IMR-90 (cell line): ENCODE measurements at regions of chr4 and their contacts with region 1.

Region 1: DNA sequence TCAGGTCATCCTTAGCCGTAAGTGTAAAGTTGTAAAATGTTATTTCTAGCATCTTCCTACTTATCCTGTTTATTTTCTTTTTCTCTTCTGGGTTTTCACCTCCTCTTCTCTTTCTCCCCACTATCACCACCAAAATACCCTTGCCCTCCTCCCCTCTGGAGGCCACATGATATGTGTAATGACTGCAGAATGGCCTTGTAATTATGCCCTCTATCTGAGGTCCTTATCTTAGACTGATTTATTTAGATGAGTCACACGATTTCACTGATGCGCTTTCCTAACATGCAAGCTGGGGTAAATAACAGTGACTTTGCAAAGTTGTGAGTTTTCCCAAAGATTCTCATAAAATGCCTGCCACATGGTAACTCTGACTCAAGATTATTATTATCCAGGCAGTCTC is 231.8 kb upstream of the GPRIN3 start:
- DNase-seq: peak; percentile 93
- ATAC-seq: peak; percentile 87
- H3K4me3 ChIP-seq: no peak overlapping the region
- H3K27ac ChIP-seq: peak overlapping the region; percentile 46; the same call in 1 of the 2 replicates
- H3K4me1 ChIP-seq: peaks cover 11% of the 10 kb centered on the region
- H3K27me3 ChIP-seq: no peaks in the 10 kb centered on the region
- CTCF ChIP-seq: no peak
- POLR2A ChIP-seq: no peak
- RAD21 ChIP-seq: no peak

Region 2: DNA sequence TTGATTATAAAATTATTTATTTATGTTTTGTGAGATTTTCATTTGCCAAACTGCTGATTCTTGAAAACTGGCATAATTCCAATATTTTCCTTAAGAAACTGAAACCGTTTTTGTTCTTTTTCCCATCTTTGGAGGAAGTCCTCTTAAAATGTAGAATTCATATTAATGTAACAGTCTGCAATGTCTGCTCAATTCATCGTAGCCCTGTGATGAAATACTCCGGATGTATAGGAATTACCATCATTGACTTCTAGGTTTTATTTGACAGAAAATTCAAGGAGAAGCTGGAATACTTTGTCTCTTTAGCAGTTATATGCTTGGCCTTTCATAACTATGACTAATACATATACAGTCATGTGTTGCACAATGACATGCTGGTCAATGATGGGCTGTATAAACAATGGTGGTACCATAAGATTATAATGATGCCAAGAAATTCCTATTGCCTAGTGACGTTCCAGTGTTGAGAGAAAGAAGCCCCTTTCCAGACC is 46.7 kb before region 1 on chr4:
- CTCF ChIA-PET with region 1: no interaction called
- POLR2A ChIA-PET with region 1: no interaction called
- dilution Hi-C with region 1: no loop called
- in situ Hi-C with region 1: no loop called
- intact Hi-C with region 1: loop called (anchors 1 kb)
- DNase-seq: peak; percentile 92
- ATAC-seq: peak; percentile 84
- H3K4me3 ChIP-seq: no peak overlapping the region
- H3K27ac ChIP-seq: no peak overlapping the region
- H3K4me1 ChIP-seq: peaks cover 10% of the 10 kb centered on the region
- H3K27me3 ChIP-seq: no peaks in the 10 kb centered on the region
- CTCF ChIP-seq: no peak
- POLR2A ChIP-seq: no peak
- RAD21 ChIP-seq: no peak

Region 3: GRCh38 chr4:89820010-89820409 is 280.6 kb after region 1 on chr4:
- CTCF ChIA-PET with region 1: no interaction called
- POLR2A ChIA-PET with region 1: no interaction called
- dilution Hi-C with region 1: no loop called
- in situ Hi-C with region 1: no loop called
- intact Hi-C with region 1: no loop called
- DNase-seq: no peak
- ATAC-seq: no peak
- H3K4me3 ChIP-seq: no peak overlapping the region
- H3K27ac ChIP-seq: no peak overlapping the region
- H3K4me1 ChIP-seq: no peaks in the 10 kb centered on the region
- H3K27me3 ChIP-seq: no peaks in the 10 kb centered on the region
- CTCF ChIP-seq: no peak
- POLR2A ChIP-seq: no peak
- RAD21 ChIP-seq: no peak